Activated CD4-positive, alpha-beta memory T cell treated with anti-CD3 and anti-CD28 coated beads for 36 hours (primary cell): ENCODE measurements at regions of chr6 and their contacts with region 1.

Region 1: DNA sequence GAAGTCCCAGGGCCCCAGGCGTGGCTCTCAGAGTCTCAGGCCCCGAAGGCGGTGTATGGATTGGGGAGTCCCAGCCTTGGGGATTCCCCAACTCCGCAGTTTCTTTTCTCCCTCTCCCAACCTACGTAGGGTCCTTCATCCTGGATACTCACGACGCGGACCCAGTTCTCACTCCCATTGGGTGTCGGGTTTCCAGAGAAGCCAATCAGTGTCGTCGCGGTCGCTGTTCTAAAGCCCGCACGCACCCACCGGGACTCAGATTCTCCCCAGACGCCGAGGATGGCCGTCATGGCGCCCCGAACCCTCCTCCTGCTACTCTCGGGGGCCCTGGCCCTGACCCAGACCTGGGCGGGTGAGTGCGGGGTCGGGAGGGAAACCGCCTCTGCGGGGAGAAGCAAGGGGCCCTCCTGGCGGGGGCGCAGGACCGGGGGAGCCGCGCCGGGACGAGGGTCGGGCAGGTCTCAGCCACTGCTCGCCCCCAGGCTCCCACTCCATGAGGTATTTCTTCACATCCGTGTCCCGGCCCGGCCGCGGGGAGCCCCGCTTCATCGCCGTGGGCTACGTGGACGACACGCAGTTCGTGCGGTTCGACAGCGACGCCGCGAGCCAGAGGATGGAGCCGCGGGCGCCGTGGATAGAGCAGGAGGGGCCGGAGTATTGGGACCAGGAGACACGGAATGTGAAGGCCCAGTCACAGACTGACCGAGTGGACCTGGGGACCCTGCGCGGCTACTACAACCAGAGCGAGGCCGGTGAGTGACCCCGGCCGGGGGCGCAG is at the start of gene HLA-A:
- DNase-seq: peak; percentile 96
- H3K4me3 Mint-ChIP-seq: peak within 1 kb of the TSS; percentile 89
- H3K27ac Mint-ChIP-seq: peak within 1 kb of the TSS; percentile 98
- H3K4me1 Mint-ChIP-seq: peaks cover 51% of the 10 kb centered on the region
- H3K27me3 Mint-ChIP-seq: peaks cover 2% of the 10 kb centered on the region
- total RNA-seq, gene HLA-A: 1,413 to 1,470 TPM

Region 2: DNA sequence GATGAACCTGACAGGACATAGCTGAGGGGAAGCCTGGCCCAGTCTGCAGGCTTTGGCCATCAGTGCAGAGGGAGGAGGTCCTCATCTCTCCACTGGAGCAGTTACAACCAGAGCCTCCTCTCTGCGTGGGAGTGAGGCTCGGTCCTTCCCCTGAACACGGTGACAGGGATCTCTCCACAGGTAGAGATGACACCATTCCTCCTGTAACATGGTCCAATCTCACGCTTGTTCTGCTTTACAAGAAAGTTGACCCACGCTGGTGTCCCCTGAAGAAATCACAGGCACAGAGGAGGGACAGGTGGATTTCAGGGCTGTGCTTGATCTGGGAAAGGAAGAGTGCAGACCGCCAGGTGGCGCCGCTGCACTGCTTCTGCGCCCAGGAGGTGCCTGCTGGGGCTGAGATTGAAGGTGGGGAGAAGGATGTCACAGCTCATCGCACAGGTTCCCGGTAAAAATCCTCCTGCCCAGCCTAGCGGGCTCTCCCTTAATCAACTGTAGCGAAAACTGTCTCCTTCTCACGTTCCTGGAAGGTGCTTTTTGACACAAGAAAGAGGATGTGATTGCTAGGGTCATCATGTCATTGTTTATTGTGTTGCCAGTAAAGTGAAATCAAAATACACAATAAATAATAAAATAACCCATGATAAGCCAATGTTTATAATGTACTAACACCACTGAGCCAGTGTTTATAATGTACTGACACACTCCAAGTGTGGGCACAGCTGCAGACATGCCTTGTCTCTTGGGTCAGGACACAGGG is 94.4 kb before region 1 on chr6:
- CTCF ChIA-PET with region 1: interaction called, 4 read pairs
- POLR2A ChIA-PET with region 1: no interaction called
- intact Hi-C with region 1: loop called (anchors 5 kb)
- DNase-seq: peak; percentile 90
- H3K4me3 Mint-ChIP-seq: no peak overlapping the region
- H3K27ac Mint-ChIP-seq: peak overlapping the region; percentile 44
- H3K4me1 Mint-ChIP-seq: peaks cover 25% of the 10 kb centered on the region
- H3K27me3 Mint-ChIP-seq: peaks cover 31% of the 10 kb centered on the region

Region 3: GRCh38 chr6:29887819-29888776 is 54.4 kb before region 1 on chr6:
- CTCF ChIA-PET with region 1: no interaction called
- POLR2A ChIA-PET with region 1: interaction called, 11 read pairs
- intact Hi-C with region 1: loop called (anchors 1 kb)
- DNase-seq: peak; percentile 93
- H3K4me3 Mint-ChIP-seq: peak overlapping the region; percentile 81
- H3K27ac Mint-ChIP-seq: peak overlapping the region; percentile 88
- H3K4me1 Mint-ChIP-seq: peaks cover 13% of the 10 kb centered on the region
- H3K27me3 Mint-ChIP-seq: no peaks in the 10 kb centered on the region

Region 4: GRCh38 chr6:29926413-29927274 is 15.8 kb before region 1 on chr6:
- CTCF ChIA-PET with region 1: interaction called, 3 read pairs
- POLR2A ChIA-PET with region 1: interaction called, 3 read pairs
- intact Hi-C with region 1: loop called (anchors 1 kb)
- DNase-seq: peak; percentile 93
- H3K4me3 Mint-ChIP-seq: peak overlapping the region; percentile 86
- H3K27ac Mint-ChIP-seq: peak overlapping the region; percentile 91
- H3K4me1 Mint-ChIP-seq: peaks cover 23% of the 10 kb centered on the region
- H3K27me3 Mint-ChIP-seq: no peaks in the 10 kb centered on the region

Region 5: DNA sequence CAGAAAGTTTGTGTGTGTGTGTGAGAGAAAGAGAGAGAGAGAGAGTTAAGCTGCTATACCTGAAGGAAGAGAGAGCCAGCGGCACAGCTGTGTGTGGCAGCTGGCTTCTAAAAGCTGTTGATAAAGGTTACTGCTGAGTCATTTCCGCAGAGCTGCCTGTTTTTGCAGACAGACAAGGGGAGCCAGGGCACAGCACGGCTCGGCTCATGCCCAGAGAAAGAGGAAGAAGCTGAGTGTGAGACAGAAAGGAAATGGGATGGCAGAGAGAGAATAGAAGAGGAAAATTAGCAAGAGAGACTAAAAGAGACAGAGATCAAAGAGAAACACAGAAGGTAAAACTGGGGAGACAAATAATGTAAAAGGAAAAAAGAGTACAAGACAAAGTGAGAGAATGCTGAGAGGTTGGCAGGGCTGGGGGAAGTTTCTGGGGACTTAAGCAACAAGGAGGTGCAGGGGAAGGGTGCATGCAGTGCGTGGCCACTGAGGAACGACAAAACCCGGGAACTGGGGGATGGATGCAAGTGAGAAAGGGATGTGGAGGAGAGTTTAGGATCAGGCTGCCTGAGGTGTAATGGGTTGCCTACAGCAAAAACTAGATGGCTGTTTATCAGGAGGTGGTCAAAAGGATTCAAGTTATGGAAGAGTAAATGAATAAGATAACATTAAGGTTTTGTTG is 22.6 kb after region 1 on chr6:
- CTCF ChIA-PET with region 1: interaction called, 3 read pairs
- POLR2A ChIA-PET with region 1: interaction called, 14 read pairs
- intact Hi-C with region 1: loop called (anchors 1 kb)
- DNase-seq: peak; percentile 88
- H3K4me3 Mint-ChIP-seq: peak overlapping the region; percentile 82
- H3K27ac Mint-ChIP-seq: peak overlapping the region; percentile 95
- H3K4me1 Mint-ChIP-seq: peaks cover 43% of the 10 kb centered on the region
- H3K27me3 Mint-ChIP-seq: no peaks in the 10 kb centered on the region

Region 6: DNA sequence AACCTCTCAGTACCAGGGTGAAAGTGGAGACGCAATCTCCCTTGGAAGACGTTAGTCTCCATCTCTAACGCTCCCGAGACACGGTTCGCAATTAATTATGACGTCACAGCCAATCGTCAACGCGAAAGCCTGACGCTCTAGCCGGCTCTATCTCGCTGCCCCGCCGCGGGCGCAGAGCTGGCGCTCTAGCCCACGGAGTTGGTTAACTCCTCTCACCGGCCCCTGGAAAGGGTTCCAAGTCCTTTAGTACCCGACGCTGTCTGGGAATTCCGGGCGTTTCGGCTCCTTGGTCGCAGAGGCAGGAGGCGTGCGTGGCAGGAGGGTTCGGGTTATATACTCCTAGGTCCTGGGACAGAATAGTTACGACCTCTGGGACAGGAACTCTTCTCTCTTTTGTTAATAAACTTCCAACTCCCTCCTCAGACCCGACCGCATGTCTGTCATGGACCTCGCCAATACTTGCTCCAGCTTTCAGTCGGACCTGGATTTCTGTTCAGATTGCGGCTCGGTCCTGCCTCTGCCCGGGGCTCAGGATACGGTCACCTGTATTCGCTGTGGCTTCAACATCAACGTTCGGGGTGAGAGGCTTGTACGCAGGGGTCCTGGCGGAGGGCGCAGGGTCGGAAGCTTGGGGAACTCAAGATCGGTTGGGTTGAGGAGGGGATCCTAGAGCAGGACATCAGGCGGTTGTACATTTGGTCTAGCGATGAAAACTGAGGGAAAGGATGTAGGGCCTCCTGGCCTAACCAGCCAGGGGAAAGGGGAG is 118.8 kb after region 1 on chr6 and contains the start of gene POLR1H:
- CTCF ChIA-PET with region 1: no interaction called
- POLR2A ChIA-PET with region 1: no interaction called
- intact Hi-C with region 1: loop called (anchors 2 kb)
- DNase-seq: peak; percentile 92
- H3K4me3 Mint-ChIP-seq: peak within 1 kb of the TSS; percentile 99
- H3K27ac Mint-ChIP-seq: peak within 1 kb of the TSS; percentile 99
- H3K4me1 Mint-ChIP-seq: peaks cover 35% of the 10 kb centered on the region
- H3K27me3 Mint-ChIP-seq: no peaks in the 10 kb centered on the region
- total RNA-seq, gene POLR1H: 69.4 to 73.2 TPM